Caco-2 (cell line): ENCODE measurements at regions of chr15 and their contacts with region 1.

Region 1: GRCh38 chr15:65400760-65401610 is 21.8 kb downstream of the IGDCC4 start:
- DNase-seq: peak; percentile 73 to 82
- H3K4me3 ChIP-seq: no peak overlapping the region
- H3K4me3 Mint-ChIP-seq: no peak overlapping the region
- H3K27ac Mint-ChIP-seq: no peak overlapping the region
- H3K4me1 ChIP-seq: no peaks in the 10 kb centered on the region
- H3K4me1 Mint-ChIP-seq: no peaks in the 10 kb centered on the region
- H3K27me3 ChIP-seq: no peaks in the 10 kb centered on the region
- H3K27me3 Mint-ChIP-seq: no peaks in the 10 kb centered on the region
- CTCF ChIP-seq: peak; percentile 60 to 86

Region 2: DNA sequence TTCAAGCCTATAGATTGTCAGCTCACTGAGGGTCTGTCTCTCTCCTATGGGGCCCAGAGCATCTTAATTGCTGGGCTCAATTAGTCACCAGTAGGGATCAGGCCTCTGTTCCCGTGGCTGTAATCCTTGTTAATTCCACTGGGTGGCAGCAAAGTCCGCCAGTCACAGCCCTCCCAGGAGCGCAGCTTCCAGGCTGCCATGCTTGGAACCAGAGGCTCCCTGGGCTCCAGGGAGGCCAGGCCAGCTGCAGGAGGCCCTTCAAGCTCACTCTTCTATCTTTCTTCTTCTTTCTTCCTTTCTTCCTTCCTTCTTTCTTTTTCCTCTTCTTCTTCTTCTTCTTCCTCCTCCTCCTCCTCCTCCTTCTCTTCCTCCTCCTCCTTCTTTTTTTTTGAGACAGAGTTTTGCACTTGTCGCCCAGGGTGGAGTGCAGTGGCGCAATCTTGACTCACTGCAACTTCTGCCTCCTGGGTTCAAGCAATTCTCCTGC is 82.1 kb before region 1 on chr15:
- CTCF ChIA-PET with region 1: interaction called, 10 read pairs
- POLR2A ChIA-PET with region 1: no interaction called
- intact Hi-C with region 1: loop called (anchors 1 kb)
- DNase-seq: peak; percentile 78 to 87
- H3K4me3 ChIP-seq: no peak overlapping the region
- H3K4me3 Mint-ChIP-seq: no peak overlapping the region
- H3K27ac Mint-ChIP-seq: no peak overlapping the region
- H3K4me1 ChIP-seq: no peaks in the 10 kb centered on the region
- H3K4me1 Mint-ChIP-seq: no peaks in the 10 kb centered on the region
- H3K27me3 ChIP-seq: no peaks in the 10 kb centered on the region
- H3K27me3 Mint-ChIP-seq: no peaks in the 10 kb centered on the region
- CTCF ChIP-seq: peak; percentile 71 to 91

Region 3: DNA sequence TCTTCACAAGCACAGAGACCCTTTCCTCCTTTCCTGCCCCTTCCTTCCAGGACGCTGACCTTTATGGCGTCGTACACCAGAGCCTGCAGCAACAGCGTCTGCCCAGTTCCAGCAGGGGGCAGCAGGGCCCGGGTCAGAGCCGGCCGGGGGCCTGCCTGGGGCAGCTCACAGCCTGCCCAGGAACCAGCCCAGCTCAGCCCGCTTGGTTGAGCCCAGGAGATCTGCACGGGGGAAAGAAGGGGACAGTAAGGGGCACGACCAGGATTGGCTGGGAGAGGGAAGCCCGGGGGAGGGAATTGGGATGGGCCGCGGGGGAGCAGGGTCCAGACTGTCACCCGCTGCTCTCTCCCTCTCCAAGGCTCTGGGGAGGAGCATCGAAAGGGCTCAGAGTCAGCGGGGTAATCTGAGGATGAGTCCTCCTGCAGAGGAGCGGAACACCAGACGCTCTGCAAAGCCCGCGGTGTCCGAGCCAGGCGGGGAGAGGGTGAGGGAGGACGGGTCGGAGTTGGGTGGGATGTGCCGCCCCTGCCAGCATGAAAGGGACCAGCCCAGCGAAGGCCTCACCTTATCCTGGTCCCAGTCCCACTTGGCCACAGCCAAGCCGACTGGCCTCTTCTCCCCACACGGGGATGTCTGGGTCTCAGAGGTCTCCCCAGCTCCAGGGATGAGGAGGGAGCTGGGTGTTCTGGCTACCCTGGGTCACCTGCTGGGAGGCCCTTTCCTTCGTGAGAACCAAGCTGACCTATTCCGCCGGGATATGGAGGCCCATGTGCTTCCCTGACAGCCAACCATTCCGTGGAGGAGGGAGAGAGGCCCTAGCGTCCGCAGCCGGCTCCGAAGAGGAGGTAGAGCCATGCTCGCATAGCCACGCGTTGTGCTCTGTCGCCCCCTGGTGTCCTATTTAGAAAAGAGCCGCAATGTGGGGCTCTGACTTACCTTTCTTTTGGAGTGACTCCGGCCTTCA is 15.8 kb before region 1 on chr15:
- CTCF ChIA-PET with region 1: interaction called, 22 read pairs
- POLR2A ChIA-PET with region 1: no interaction called
- intact Hi-C with region 1: loop called (anchors 2 kb)
- DNase-seq: peak; percentile 85 to 90
- H3K4me3 ChIP-seq: peak overlapping the region; percentile 25
- H3K4me3 Mint-ChIP-seq: peak overlapping the region; percentile 72
- H3K27ac Mint-ChIP-seq: peak overlapping the region; percentile 83
- H3K4me1 ChIP-seq: peaks cover 13% of the 10 kb centered on the region
- H3K4me1 Mint-ChIP-seq: peaks cover 27% of the 10 kb centered on the region
- H3K27me3 ChIP-seq: no peaks in the 10 kb centered on the region
- H3K27me3 Mint-ChIP-seq: no peaks in the 10 kb centered on the region
- CTCF ChIP-seq: peak; percentile 80 to 87

Region 4: GRCh38 chr15:65421360-65422070 is 20.5 kb after region 1 on chr15:
- CTCF ChIA-PET with region 1: interaction called, 22 read pairs
- POLR2A ChIA-PET with region 1: no interaction called
- intact Hi-C with region 1: no loop called
- DNase-seq: peak; percentile 36 to 56
- H3K4me3 ChIP-seq: peak overlapping the region; percentile 84
- H3K4me3 Mint-ChIP-seq: peak overlapping the region; percentile 83
- H3K27ac Mint-ChIP-seq: peak overlapping the region; percentile 48
- H3K4me1 ChIP-seq: peaks cover 19% of the 10 kb centered on the region
- H3K4me1 Mint-ChIP-seq: peaks cover 26% of the 10 kb centered on the region
- H3K27me3 ChIP-seq: no peaks in the 10 kb centered on the region
- H3K27me3 Mint-ChIP-seq: no peaks in the 10 kb centered on the region
- CTCF ChIP-seq: no peak

Region 5: GRCh38 chr15:65431731-65432130 is 30.7 kb after region 1 on chr15:
- CTCF ChIA-PET with region 1: interaction called, 18 read pairs
- POLR2A ChIA-PET with region 1: no interaction called
- intact Hi-C with region 1: loop called (anchors 1 kb)
- DNase-seq: no peak
- H3K4me3 ChIP-seq: no peak overlapping the region
- H3K4me3 Mint-ChIP-seq: no peak overlapping the region
- H3K27ac Mint-ChIP-seq: no peak overlapping the region
- H3K4me1 ChIP-seq: no peaks in the 10 kb centered on the region
- H3K4me1 Mint-ChIP-seq: no peaks in the 10 kb centered on the region
- H3K27me3 ChIP-seq: no peaks in the 10 kb centered on the region; the same call in 1 of the 2 replicates
- H3K27me3 Mint-ChIP-seq: no peaks in the 10 kb centered on the region
- CTCF ChIP-seq: no peak

Region 6: GRCh38 chr15:65598468-65598867 is 197.5 kb after region 1 on chr15:
- CTCF ChIA-PET with region 1: no interaction called
- POLR2A ChIA-PET with region 1: no interaction called
- intact Hi-C with region 1: no loop called
- DNase-seq: no peak
- H3K4me3 ChIP-seq: no peak overlapping the region
- H3K4me3 Mint-ChIP-seq: no peak overlapping the region
- H3K27ac Mint-ChIP-seq: no peak overlapping the region
- H3K4me1 ChIP-seq: no peaks in the 10 kb centered on the region
- H3K4me1 Mint-ChIP-seq: no peaks in the 10 kb centered on the region
- H3K27me3 ChIP-seq: no peaks in the 10 kb centered on the region
- H3K27me3 Mint-ChIP-seq: no peaks in the 10 kb centered on the region
- CTCF ChIP-seq: no peak